ENCODE measurements at regions of chr13 and their contacts with region 1.

Region 1: DNA sequence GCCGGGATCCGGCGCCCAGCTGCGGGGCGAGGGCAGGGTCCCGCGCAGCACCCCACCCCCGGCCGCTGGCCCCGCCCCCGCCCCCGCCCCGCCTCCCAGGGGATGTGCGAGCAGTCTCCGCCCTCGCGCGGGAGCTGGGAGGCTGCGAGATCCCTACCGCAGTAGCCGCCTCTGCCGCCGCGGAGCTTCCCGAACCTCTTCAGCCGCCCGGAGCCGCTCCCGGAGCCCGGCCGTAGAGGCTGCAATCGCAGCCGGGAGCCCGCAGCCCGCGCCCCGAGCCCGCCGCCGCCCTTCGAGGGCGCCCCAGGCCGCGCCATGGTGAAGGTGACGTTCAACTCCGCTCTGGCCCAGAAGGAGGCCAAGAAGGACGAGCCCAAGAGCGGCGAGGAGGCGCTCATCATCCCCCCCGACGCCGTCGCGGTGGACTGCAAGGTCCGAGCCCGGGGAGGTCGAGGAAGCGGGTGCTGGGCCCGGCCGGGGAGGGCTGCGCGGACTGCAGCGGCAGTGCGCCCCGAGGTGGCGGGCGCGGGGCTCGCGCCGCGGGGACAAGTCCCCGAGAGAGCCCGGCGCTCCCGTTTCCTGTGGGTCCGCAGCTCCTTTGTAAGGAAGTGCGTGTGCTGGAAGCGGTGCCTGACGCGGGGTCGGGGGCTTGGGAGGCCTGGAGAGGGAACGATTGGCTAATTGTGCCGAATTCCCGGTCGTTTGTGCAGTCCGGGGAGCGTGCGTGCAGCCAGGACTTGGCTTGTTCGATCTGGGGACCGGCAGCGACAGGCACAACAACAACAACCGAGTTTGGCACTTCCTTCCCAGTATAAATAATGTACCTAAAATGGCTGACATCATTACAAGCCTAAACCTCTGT is at the start of gene ITM2B:
- DNase-seq: peak; percentile 65
- ATAC-seq: peak; percentile 76
- H3K4me3 Mint-ChIP-seq: peak within 1 kb of the TSS; percentile 93
- H3K27ac Mint-ChIP-seq: peak within 1 kb of the TSS; percentile 87
- H3K4me1 Mint-ChIP-seq: peaks cover 54% of the 10 kb centered on the region
- H3K27me3 Mint-ChIP-seq: peaks cover 7% of the 10 kb centered on the region
- CTCF ChIP-seq: no peak
- total RNA-seq, gene ITM2B: 102 and 114 TPM in 2 replicates

Region 2: GRCh38 chr13:47545201-47546024 is 687.9 kb before region 1 on chr13:
- CTCF ChIA-PET with region 1: no interaction called
- POLR2A ChIA-PET with region 1: no interaction called
- intact Hi-C with region 1: no loop called
- DNase-seq: no peak
- ATAC-seq: no peak
- H3K4me3 Mint-ChIP-seq: no peak overlapping the region
- H3K27ac Mint-ChIP-seq: no peak overlapping the region
- H3K4me1 Mint-ChIP-seq: no peaks in the 10 kb centered on the region
- H3K27me3 Mint-ChIP-seq: no peaks in the 10 kb centered on the region
- CTCF ChIP-seq: no peak

Region 3: DNA sequence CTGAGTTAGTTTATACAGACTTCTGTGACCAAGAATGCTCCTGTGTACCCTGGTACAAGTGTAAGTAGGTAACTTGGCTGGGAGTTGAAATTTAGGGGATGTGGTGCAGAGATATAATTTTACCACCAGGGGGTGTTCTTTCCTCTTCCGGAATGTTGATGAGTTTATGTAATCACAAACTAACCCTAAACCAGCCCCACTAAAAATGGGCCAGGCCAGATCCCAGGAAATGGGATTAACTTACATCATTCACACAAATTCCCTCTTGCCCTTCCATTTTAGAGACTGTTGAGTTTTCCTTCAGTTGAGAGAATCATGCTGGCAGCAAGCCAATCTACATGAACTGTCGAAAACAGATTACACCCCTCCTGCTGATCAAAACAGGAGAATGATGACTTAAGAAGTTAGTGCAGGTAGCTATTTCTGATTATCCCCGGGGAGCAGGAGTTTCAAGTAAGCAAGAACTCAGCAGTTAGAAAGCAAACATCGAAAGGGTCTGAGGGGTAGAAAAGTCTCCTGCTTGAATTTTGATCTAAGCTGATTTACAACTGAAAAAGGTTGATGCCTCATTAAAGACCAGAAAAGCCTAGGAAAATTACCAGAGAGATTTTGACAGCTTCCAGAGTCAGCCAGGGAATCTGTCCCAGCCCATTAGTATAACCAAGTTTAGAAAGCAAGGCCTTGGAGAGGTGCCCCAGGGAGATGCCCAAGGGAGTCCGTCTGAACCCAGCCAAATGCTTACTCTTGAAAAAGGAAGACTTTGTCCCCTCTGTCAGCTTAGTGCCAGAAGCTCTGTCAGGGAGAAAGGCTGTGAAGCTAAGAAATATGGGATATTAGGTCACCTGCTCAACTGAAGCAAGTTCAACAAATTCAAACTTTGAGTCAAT is 106.1 kb before region 1 on chr13:
- CTCF ChIA-PET with region 1: interaction called, 15 read pairs
- POLR2A ChIA-PET with region 1: interaction called, 20 read pairs
- intact Hi-C with region 1: loop called (anchors 1 kb)
- DNase-seq: no peak
- ATAC-seq: peak; percentile 90
- H3K4me3 Mint-ChIP-seq: no peak overlapping the region
- H3K27ac Mint-ChIP-seq: peak overlapping the region; percentile 9
- H3K4me1 Mint-ChIP-seq: peaks cover 7% of the 10 kb centered on the region
- H3K27me3 Mint-ChIP-seq: no peaks in the 10 kb centered on the region
- CTCF ChIP-seq: peak; percentile 74

Region 4: GRCh38 chr13:48222358-48223301 is 10.6 kb before region 1 on chr13:
- CTCF ChIA-PET with region 1: interaction called, 4 read pairs
- POLR2A ChIA-PET with region 1: interaction called, 11 read pairs
- intact Hi-C with region 1: loop called (anchors 2 kb)
- DNase-seq: no peak
- ATAC-seq: no peak
- H3K4me3 Mint-ChIP-seq: peak overlapping the region; percentile 15
- H3K27ac Mint-ChIP-seq: peak overlapping the region; percentile 10
- H3K4me1 Mint-ChIP-seq: peaks cover 32% of the 10 kb centered on the region
- H3K27me3 Mint-ChIP-seq: no peaks in the 10 kb centered on the region
- CTCF ChIP-seq: no peak

Region 5: DNA sequence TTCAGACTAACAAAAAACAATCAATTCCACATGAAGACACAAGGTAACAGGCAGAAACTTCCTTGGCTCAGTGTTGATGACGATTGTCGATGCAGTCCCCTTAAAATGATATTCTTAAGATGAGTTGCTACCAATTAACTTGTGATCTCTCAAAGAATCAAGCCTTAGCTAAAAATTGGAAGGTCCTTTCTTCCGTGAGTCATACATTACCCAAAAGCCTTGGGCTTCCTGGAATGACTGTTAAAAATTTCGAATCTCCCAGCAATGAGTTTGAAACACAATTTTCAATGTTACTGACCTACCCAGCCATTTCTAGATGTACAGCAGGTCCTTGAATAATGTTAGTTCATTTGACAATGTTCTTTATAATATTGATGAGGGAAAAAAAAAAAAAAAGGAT is 42.2 kb after region 1 on chr13:
- CTCF ChIA-PET with region 1: no interaction called
- POLR2A ChIA-PET with region 1: no interaction called
- intact Hi-C with region 1: no loop called
- DNase-seq: no peak
- ATAC-seq: no peak
- H3K4me3 Mint-ChIP-seq: no peak overlapping the region
- H3K27ac Mint-ChIP-seq: no peak overlapping the region
- H3K4me1 Mint-ChIP-seq: peaks cover 4% of the 10 kb centered on the region
- H3K27me3 Mint-ChIP-seq: no peaks in the 10 kb centered on the region
- CTCF ChIP-seq: no peak

Region 6: DNA sequence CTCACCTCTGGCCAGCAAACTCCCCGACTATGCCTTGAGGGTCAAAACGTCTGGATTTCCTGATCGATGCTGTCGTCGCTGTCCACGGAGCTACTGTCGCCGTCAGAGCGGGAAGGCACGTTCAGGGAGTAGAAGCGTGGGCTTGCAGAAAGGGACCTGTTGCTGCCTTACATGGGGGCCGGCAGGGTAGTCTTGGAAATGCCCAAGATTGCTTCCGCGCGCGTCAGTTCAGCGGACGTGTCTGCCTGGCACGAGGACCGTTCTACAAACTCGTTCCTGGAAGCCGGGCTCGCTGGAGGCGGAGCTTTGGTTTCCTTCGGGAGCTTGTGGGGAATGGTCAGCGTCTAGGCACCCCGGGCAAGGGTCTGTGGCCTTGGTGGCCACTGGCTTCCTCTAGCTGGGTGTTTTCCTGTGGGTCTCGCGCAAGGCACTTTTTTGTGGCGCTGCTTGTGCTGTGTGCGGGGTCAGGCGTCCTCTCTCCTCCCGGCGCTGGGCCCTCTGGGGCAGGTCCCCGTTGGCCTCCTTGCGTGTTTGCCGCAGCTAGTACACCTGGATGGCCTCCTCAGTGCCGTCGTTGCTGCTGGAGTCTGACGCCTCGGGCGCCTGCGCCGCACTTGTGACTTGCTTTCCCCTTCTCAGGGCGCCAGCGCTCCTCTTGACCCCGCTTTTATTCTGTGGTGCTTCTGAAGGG is 85.7 kb after region 1 on chr13:
- CTCF ChIA-PET with region 1: no interaction called
- POLR2A ChIA-PET with region 1: no interaction called
- intact Hi-C with region 1: loop called (anchors 5 kb)
- DNase-seq: no peak
- ATAC-seq: peak; percentile 29
- H3K4me3 Mint-ChIP-seq: peak overlapping the region; percentile 81
- H3K27ac Mint-ChIP-seq: no peak overlapping the region
- H3K4me1 Mint-ChIP-seq: peaks cover 48% of the 10 kb centered on the region
- H3K27me3 Mint-ChIP-seq: no peaks in the 10 kb centered on the region
- CTCF ChIP-seq: no peak

Region 7: GRCh38 chr13:48769107-48769704 is 535.9 kb after region 1 on chr13:
- CTCF ChIA-PET with region 1: interaction called, 3 read pairs
- POLR2A ChIA-PET with region 1: no interaction called
- intact Hi-C with region 1: loop called (anchors 2 kb)
- DNase-seq: peak; percentile 25
- ATAC-seq: peak; percentile 100
- H3K4me3 Mint-ChIP-seq: no peak overlapping the region
- H3K27ac Mint-ChIP-seq: no peak overlapping the region
- H3K4me1 Mint-ChIP-seq: peaks cover 2% of the 10 kb centered on the region
- H3K27me3 Mint-ChIP-seq: peaks cover 17% of the 10 kb centered on the region
- CTCF ChIP-seq: peak; percentile 38